ENCODE measurements at regions of chr2 and their contacts with region 1.

Region 1: DNA sequence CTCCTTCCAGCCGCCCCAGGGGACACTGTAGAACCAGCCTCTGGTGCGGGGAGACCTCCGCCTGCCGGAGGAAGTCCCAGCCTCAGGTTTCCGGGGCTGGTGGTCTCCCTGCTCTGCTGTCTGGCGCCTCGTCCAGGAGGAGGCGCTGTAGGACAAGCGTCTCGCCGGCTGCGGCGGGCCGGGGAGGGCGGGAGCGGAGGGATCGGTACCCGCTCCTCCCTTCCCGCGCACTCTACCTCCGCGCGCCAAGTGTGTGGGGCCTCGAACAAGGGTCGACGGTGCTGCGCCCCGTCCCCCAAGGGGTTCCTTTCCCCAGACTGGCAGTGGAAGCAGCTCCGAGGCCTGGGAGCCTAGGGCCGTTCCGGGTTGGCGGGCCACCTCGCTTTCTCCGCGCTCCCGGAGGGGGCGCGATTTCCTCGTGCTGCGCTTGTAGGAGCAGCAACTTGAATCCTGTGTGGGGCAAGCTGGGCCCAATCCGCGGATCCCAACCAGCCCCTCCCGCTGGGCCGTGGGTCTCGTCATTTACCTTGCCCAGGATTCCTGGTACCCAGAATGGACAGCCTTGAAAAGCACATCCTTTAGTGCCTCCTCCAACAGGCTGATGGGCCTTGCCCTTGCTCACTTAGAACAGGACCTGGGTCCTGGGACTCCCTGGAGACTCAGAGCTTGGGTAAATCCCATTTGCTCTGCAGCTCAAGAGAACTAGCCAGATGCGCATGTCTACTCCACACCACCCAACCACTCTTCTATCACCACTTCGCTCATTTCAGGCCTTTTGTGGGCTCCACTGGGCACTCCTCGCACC is 10.6 kb upstream of the HOXD4 start:
- DNase-seq: peak; percentile 59
- H3K4me3 ChIP-seq: peak overlapping the region; percentile 63
- H3K27ac ChIP-seq: no peak overlapping the region
- H3K4me1 ChIP-seq: peaks cover 27% of the 10 kb centered on the region
- H3K27me3 ChIP-seq: peaks cover 100% of the 10 kb centered on the region
- CTCF ChIP-seq: peak; percentile 96

Region 2: GRCh38 chr2:175966839-175967238 is 173.9 kb before region 1 on chr2:
- intact Hi-C with region 1: no loop called
- DNase-seq: no peak
- H3K4me3 ChIP-seq: no peak overlapping the region
- H3K27ac ChIP-seq: no peak overlapping the region
- H3K4me1 ChIP-seq: no peaks in the 10 kb centered on the region
- H3K27me3 ChIP-seq: no peaks in the 10 kb centered on the region
- CTCF ChIP-seq: no peak

Region 3: DNA sequence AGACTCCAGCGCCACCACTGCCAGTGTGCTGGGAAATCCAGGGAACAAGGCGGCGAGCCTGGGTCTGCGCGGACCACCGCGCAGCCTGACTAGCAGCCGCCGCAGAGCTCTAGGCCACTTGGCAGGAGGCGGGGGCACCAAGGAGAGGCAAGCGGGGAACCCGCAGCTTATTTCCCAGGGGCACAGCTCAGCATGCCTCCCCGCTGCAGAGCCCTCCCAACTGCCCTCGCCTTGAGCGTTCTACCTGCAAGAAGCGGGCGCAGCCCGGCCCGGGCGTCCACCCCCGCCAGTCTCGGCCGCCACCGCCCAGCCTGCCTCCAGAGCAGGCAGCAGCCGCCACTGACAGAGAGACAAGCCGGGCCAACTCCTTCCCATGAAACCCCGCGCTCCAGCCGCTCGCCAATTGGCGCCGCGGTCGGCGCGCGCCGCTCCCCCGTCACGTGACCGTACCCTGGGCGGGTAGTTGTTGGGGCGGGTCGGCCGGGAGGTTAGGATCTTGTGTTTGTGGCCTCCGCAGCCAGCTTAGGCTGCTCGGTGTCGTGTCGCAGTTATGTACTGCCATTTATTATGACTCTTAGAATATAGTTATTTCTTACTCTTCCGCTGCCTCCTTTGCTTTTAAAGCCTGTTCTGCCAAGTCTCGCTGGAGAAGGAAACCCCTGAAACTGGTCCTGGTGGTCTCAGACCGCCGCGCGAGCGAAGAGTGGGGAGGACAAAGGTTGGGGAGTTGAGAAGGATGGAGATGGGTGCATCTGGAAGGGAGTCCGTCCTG is 138.6 kb before region 1 on chr2 and contains the start of gene LNPK:
- intact Hi-C with region 1: no loop called
- DNase-seq: peak; percentile 93
- H3K4me3 ChIP-seq: peak within 1 kb of the TSS; percentile 94
- H3K27ac ChIP-seq: peak within 1 kb of the TSS; percentile 96
- H3K4me1 ChIP-seq: peaks cover 60% of the 10 kb centered on the region
- H3K27me3 ChIP-seq: no peaks in the 10 kb centered on the region
- CTCF ChIP-seq: no peak
- total RNA-seq, gene LNPK: 42.3 TPM

Region 4: GRCh38 chr2:176206682-176207081 is 66.0 kb after region 1 on chr2:
- intact Hi-C with region 1: no loop called
- DNase-seq: no peak
- H3K4me3 ChIP-seq: no peak overlapping the region
- H3K27ac ChIP-seq: no peak overlapping the region
- H3K4me1 ChIP-seq: no peaks in the 10 kb centered on the region
- H3K27me3 ChIP-seq: peaks cover 44% of the 10 kb centered on the region
- CTCF ChIP-seq: no peak

Region 5: DNA sequence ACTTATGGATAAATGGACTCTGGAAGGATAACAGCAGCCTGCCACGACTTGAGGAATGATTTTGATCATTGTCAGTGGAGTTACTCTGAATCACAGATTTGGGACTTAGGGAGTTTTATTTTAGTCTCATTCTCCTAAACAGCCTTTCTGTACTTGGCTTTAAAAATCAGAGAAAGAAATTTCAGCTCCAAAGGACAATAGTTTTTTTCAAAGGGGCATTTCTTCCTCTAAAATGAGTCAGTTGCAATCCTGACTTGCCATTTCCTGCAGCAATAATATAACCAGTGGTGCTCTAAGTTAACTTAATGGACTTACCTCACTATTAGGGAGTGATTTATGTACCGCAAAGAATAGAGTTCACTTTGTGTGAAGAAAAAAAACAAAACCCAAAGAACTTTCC is 93.4 kb after region 1 on chr2:
- intact Hi-C with region 1: no loop called
- DNase-seq: no peak
- H3K4me3 ChIP-seq: no peak overlapping the region
- H3K27ac ChIP-seq: no peak overlapping the region
- H3K4me1 ChIP-seq: no peaks in the 10 kb centered on the region
- H3K27me3 ChIP-seq: peaks cover 82% of the 10 kb centered on the region
- CTCF ChIP-seq: no peak

Region 6: GRCh38 chr2:176454893-176455811 is 314.4 kb after region 1 on chr2:
- intact Hi-C with region 1: loop called (anchors 5 kb)
- DNase-seq: peak; percentile 82
- H3K4me3 ChIP-seq: no peak overlapping the region
- H3K27ac ChIP-seq: peak overlapping the region; percentile 72
- H3K4me1 ChIP-seq: peaks cover 13% of the 10 kb centered on the region
- H3K27me3 ChIP-seq: peaks cover 76% of the 10 kb centered on the region
- CTCF ChIP-seq: peak; percentile 97

Region 7: GRCh38 chr2:176554101-176555048 is 413.7 kb after region 1 on chr2:
- intact Hi-C with region 1: loop called (anchors 5 kb)
- DNase-seq: no peak
- H3K4me3 ChIP-seq: peak overlapping the region; percentile 68
- H3K27ac ChIP-seq: peak overlapping the region; percentile 62
- H3K4me1 ChIP-seq: peaks cover 20% of the 10 kb centered on the region
- H3K27me3 ChIP-seq: peaks cover 62% of the 10 kb centered on the region
- CTCF ChIP-seq: peak; percentile 82

Region 8: GRCh38 chr2:176638167-176639015 is 497.7 kb after region 1 on chr2:
- intact Hi-C with region 1: loop called (anchors 5 kb)
- DNase-seq: peak; percentile 62
- H3K4me3 ChIP-seq: peak overlapping the region; percentile 72
- H3K27ac ChIP-seq: no peak overlapping the region
- H3K4me1 ChIP-seq: peaks cover 8% of the 10 kb centered on the region
- H3K27me3 ChIP-seq: peaks cover 98% of the 10 kb centered on the region
- CTCF ChIP-seq: peak; percentile 85